ENCODE measurements at regions of chr3 and their contacts with region 1.

Region 1: GRCh38 chr3:48685602-48686511 is at the start of gene NCKIPSD:
- DNase-seq: peak; percentile 50 to 93
- H3K4me3 ChIP-seq: peak within 1 kb of the TSS; percentile 81 to 94
- H3K27ac ChIP-seq: peak within 1 kb of the TSS; percentile 86 to 90
- H3K4me1 ChIP-seq: peaks cover 10 to 23% of the 10 kb centered on the region in 2 donors
- H3K27me3 ChIP-seq: no peaks in the 10 kb centered on the region
- CTCF ChIP-seq: peak; percentile 63 to 96 (median 75)
- total RNA-seq, gene NCKIPSD: 102 TPM

Region 2: DNA sequence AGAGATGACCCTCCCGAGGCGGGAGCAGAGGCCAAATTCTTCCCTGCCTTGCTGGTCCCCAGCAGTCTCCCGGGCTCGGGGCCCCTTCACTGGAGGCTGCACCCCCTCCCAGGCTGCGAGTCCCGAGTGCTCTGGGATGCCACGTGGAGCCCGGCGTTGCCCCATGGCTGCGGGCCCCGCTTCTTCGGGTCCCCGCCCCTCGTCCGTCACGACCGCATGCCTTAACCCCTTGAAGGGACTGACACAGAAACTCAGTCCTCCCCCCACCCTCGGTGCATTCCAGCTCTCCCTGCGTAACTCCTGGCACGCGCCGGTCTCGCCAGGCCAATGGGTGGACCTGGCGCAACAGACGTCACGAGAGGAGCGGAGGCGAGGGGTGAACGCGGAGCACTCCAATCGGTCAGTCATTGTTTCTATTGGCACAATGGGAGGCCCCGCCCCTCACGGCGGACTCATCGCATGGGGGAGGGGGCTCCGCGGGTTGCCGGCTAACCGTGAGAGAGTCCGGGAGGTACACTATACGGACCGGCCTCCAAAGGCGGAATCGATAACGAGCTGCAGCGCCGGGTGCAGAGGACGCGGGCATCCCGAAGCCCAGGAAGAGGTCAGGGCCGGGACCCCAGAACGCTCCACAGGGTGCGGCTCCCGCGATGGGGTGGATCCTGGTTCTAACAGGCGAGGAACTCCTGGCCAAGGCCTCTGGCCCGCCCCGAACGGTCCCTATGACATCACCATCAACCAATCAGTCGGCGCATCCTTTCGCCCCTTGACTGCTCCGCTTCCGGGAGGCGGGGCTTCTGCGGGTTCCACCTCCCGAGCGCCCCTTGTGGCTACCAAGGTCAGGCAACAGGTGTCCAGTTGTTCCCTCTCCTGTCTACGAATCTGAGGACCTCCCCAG is 22.2 kb before region 1 on chr3:
- intact Hi-C with region 1: loop called (anchors 1 kb)
- DNase-seq: peak; percentile 92 to 99
- H3K4me3 ChIP-seq: peak overlapping the region; percentile 65 to 73
- H3K27ac ChIP-seq: peak overlapping the region; percentile 95 to 97
- H3K4me1 ChIP-seq: peaks cover 6 to 14% of the 10 kb centered on the region in 2 donors
- H3K27me3 ChIP-seq: no peaks in the 10 kb centered on the region
- CTCF ChIP-seq: peak; percentile 72 to 84 (median 82)

Region 3: GRCh38 chr3:48739955-48740823 is 54.3 kb after region 1 on chr3:
- intact Hi-C with region 1: loop called (anchors 1 kb)
- DNase-seq: peak; percentile 47 to 92
- H3K4me3 ChIP-seq: peak overlapping the region in 1 of 2 donors; percentile 27
- H3K27ac ChIP-seq: peak overlapping the region; percentile 73 to 77
- H3K4me1 ChIP-seq: peaks cover 7 to 10% of the 10 kb centered on the region in 2 donors
- H3K27me3 ChIP-seq: no peaks in the 10 kb centered on the region
- CTCF ChIP-seq: peak; percentile 84 to 90 (median 89)

Measured in ascending aorta (tissue), 2 donors.